GM12878 (cell line): ENCODE measurements at regions of chr14 and their contacts with region 1.

Region 1: GRCh38 chr14:42045383-42045782 is 438.7 kb downstream of the LRFN5 start:
- DNase-seq: no peak
- ATAC-seq: no peak
- H3K4me3 ChIP-seq: no peak overlapping the region
- H3K27ac ChIP-seq: no peak overlapping the region
- H3K4me1 ChIP-seq: no peaks in the 10 kb centered on the region
- H3K27me3 ChIP-seq: no peaks in the 10 kb centered on the region
- CTCF ChIP-seq: no peak
- EP300 ChIP-seq: no peak
- POLR2A ChIP-seq: no peak
- RAD21 ChIP-seq: no peak

Region 2: DNA sequence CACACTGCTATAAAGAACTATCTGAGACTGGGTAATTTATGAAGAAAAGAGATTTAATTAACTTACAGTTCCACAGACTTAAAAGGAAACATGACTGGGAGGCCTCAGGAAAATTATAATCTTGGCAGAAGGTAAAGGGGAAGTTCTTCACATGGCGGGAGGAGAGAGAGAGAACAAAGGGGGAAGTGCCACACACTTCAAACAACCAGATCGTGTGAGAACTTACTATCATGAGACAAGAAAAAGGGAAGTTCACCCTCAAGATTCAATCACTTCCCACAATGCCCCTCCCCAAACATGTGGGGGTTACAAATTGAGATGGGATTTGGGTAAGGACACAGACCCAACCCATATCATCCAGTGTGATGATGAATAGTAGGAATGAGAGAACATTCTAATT is 72.2 kb before region 1 on chr14:
- CTCF ChIA-PET with region 1: no interaction called
- POLR2A ChIA-PET with region 1: no interaction called
- RAD21 ChIA-PET with region 1: no interaction called
- SMC1A ChIA-PET with region 1: no interaction called
- in situ Hi-C with region 1: no loop called
- intact Hi-C with region 1: no loop called
- DNase-seq: no peak
- ATAC-seq: no peak
- H3K4me3 ChIP-seq: no peak overlapping the region
- H3K27ac ChIP-seq: no peak overlapping the region
- H3K4me1 ChIP-seq: no peaks in the 10 kb centered on the region
- H3K27me3 ChIP-seq: no peaks in the 10 kb centered on the region
- CTCF ChIP-seq: no peak
- EP300 ChIP-seq: no peak
- POLR2A ChIP-seq: no peak
- RAD21 ChIP-seq: no peak

Region 3: GRCh38 chr14:42070031-42070430 is 24.6 kb after region 1 on chr14:
- CTCF ChIA-PET with region 1: no interaction called
- POLR2A ChIA-PET with region 1: no interaction called
- RAD21 ChIA-PET with region 1: no interaction called
- SMC1A ChIA-PET with region 1: no interaction called
- in situ Hi-C with region 1: no loop called
- intact Hi-C with region 1: loop called (anchors 2 kb)
- DNase-seq: no peak
- ATAC-seq: no peak
- H3K4me3 ChIP-seq: no peak overlapping the region
- H3K27ac ChIP-seq: no peak overlapping the region
- H3K4me1 ChIP-seq: no peaks in the 10 kb centered on the region
- H3K27me3 ChIP-seq: no peaks in the 10 kb centered on the region
- CTCF ChIP-seq: no peak
- EP300 ChIP-seq: no peak
- POLR2A ChIP-seq: no peak
- RAD21 ChIP-seq: no peak